ENCODE measurements at regions of chr19 and their contacts with region 1.

Region 1: GRCh38 chr19:18063463-18063862 is 23.3 kb downstream of the IL12RB1 start:
- DNase-seq: peak; percentile 58
- H3K4me3 Mint-ChIP-seq: no peak overlapping the region
- H3K27ac Mint-ChIP-seq: no peak overlapping the region
- H3K4me1 Mint-ChIP-seq: peaks cover 5% of the 10 kb centered on the region
- H3K27me3 Mint-ChIP-seq: no peaks in the 10 kb centered on the region

Region 2: DNA sequence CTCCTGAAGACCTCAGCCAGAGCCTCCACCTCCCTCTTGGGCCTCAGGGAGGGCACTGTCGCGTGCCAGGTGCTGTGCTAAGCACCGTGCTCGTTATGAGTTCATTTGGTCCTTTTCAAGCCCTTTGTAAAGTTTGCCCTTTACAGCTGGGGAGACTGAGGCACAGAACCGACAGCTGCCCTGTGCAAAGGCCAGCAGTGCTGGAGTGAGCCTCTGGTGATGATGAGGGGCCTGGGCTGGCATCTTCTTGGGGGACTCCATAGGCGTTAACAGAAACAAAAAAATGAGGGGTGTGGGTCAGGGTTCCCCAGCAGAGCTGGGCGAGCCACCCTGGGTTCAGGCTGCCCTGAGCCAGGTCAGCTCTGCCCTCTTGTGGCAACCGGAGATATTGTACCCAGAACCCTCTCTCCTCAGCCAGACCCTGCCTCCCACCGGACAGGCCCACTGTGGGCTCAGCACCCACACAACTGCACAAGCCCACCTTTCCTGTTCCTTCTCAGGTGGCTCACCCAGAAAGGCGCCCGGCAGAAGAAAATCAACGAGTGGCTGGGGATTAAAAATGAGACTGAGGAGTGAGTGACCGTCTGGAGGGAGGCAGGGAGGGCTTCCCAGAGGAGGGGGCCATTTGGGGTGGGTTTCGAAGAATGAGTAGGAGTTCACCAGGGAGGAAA is 104.6 kb after region 1 on chr19:
- CTCF ChIA-PET with region 1: interaction called, 11 read pairs
- DNase-seq: peak; percentile 79
- H3K4me3 Mint-ChIP-seq: no peak overlapping the region
- H3K27ac Mint-ChIP-seq: no peak overlapping the region
- H3K4me1 Mint-ChIP-seq: peaks cover 8% of the 10 kb centered on the region
- H3K27me3 Mint-ChIP-seq: no peaks in the 10 kb centered on the region